HEK293 (cell line): ENCODE measurements at regions of chr1 and their contacts with region 1.

Region 1: DNA sequence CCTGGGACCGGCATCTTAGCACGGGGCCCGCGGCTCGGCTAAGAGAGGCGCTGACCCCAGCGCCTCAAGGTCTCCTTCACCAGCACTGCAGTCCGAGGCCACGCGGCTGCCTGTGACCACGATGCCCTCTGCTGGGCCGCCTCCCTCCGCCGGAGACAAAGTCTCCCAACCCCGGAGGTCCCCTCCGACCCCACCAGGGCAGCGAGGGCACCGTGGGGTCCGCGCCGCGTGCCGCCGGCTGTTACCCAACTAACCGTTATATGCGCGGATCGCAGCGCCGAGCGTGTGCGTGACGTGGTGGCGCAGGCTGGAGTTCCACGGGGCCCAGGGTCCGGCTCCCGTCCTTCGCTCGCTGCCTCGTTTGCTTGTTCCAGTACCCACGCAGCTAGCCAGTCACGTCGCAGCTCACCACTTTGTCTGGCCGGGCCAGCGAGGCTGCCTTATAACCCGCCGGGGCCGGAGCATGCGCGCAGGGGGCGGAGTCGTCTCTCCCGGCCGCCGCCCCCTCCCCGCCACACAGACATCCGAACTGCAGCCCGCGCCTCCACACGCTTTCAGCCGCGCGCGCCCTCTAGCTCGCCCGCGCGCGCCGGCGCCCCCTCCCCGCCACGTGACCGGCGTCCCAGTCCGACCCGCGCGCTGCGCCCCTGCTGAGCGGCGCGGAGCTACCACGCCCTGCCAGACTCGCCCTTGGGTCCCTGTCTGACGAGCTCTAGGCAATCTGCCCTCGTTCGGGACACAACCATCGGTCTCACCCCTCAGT is at the start of gene SLC16A1:
- H3K4me3 ChIP-seq: peak within 1 kb of the TSS; percentile 88
- H3K27ac ChIP-seq: peak within 1 kb of the TSS; percentile 86
- H3K4me1 ChIP-seq: no peaks in the 10 kb centered on the region
- CTCF ChIP-seq: peak; percentile 96

Region 2: GRCh38 chr1:112460615-112461014 is 495.3 kb before region 1 on chr1:
- CTCF ChIA-PET with region 1: no interaction called
- POLR2A ChIA-PET with region 1: interaction called, 10 read pairs
- H3K4me3 ChIP-seq: no peak overlapping the region
- H3K27ac ChIP-seq: no peak overlapping the region
- H3K4me1 ChIP-seq: no peaks in the 10 kb centered on the region
- CTCF ChIP-seq: no peak

Region 3: DNA sequence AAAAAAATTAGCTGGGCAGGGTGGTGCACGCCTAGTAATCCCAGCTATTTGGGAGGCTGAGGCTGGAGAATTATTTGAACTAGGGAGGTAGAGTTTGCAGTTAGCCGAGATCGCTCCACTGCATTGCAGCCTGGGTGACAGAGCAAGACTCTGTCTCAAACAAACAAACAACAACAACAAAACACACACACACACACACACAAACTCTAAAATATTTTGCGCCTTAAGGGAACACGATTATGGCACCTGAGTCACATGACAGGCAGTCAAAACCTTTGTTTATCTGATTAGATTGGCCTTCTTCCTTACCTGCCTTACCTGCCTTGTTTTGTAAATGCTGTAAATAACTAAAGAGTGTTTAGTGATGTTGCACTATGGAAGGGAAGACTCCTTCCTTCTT is 467.8 kb before region 1 on chr1:
- CTCF ChIA-PET with region 1: no interaction called
- POLR2A ChIA-PET with region 1: no interaction called
- H3K4me3 ChIP-seq: no peak overlapping the region
- H3K27ac ChIP-seq: no peak overlapping the region
- H3K4me1 ChIP-seq: no peaks in the 10 kb centered on the region
- CTCF ChIP-seq: no peak

Region 4: GRCh38 chr1:112674986-112675727 is 280.8 kb before region 1 on chr1:
- CTCF ChIA-PET with region 1: no interaction called
- POLR2A ChIA-PET with region 1: no interaction called
- H3K4me3 ChIP-seq: peak overlapping the region; percentile 80
- H3K27ac ChIP-seq: peak overlapping the region; percentile 85
- H3K4me1 ChIP-seq: peaks cover 5% of the 10 kb centered on the region; the same call in 1 of the 2 replicates
- CTCF ChIP-seq: peak; percentile 39; the same call in 1 of the 2 replicates

Region 5: DNA sequence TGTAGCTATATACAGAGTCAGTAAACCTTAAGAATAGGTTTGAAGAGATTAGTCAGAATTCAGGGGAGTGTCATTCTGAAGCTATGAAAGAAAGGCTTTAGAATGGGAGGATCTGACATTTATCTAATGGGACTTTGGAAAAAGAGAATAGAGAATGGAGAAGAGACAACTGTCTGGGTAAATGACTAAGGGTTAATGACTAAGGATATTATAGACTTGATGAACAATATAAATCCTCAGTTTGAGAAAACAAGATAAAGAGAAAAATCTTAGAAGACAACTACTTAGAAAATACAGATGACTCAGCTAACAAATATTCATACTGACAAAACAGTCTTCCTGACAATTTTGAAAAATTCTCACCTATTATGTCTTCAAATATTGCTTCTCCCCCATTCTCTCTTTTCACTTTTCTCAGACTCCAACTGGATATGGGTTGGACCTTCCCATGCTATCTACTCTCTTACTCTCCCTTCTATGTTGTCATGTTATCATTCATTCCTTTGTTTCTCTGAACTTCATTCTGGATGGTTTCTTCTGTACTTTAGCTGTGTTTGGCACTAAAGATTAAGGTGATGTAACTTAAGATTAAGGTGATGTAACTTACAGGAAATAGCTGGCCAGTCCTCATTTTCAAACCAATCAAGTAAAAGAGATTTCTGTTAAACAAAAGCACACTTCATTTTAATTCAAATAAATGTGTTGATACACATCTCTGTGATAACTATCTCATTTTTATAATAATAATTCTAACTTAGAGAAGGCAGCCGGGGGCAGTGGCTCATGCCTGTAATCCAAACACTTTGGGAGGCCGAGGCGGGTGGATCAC is 20.3 kb before region 1 on chr1:
- CTCF ChIA-PET with region 1: interaction called, 3 read pairs
- POLR2A ChIA-PET with region 1: interaction called, 16 read pairs
- H3K4me3 ChIP-seq: no peak overlapping the region
- H3K27ac ChIP-seq: no peak overlapping the region
- H3K4me1 ChIP-seq: peaks cover 16% of the 10 kb centered on the region
- CTCF ChIP-seq: no peak

Region 6: GRCh38 chr1:113021430-113022086 is 65.6 kb after region 1 on chr1:
- CTCF ChIA-PET with region 1: no interaction called
- POLR2A ChIA-PET with region 1: no interaction called
- H3K4me3 ChIP-seq: no peak overlapping the region
- H3K27ac ChIP-seq: no peak overlapping the region
- H3K4me1 ChIP-seq: 0 out of 2 replicates have a peak, but pooled peaks cover 3% of the 10 kb centered on the region
- CTCF ChIP-seq: no peak

Region 7: DNA sequence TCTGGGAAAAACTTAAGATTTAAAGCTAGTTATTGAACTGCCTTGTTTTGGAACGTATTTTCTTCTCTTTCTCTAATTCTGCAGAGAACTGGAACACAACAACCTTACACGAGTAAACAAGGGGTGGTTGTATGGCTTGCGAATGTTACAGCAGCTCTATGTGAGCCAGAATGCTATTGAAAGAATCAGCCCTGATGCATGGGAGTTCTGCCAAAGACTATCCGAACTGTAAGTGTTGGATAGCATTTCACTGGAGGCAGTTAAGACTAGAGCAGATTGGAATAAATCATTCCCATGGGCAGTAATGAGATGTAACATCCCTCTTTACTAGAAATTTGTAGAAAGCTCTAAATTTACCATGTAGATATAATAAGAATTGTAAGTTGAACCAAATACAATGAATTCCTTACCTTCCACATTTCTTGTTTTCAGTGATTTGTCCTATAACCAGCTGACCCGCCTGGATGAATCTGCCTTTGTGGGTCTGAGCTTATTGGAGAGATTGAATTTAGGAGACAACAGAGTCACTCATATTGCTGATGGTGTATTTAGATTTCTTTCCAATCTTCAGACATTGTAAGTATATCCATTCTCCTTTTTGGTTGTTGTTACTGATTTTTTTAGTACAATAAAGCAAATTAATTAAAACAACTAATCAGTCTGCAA is 140.0 kb after region 1 on chr1:
- CTCF ChIA-PET with region 1: no interaction called
- POLR2A ChIA-PET with region 1: no interaction called
- H3K4me3 ChIP-seq: no peak overlapping the region
- H3K27ac ChIP-seq: no peak overlapping the region
- H3K4me1 ChIP-seq: no peaks in the 10 kb centered on the region
- CTCF ChIP-seq: no peak